ENCODE measurements at regions of chr12 and their contacts with region 1.

Region 1: GRCh38 chr12:24778486-24779304 is 170.2 kb downstream of the BCAT1 start:
- DNase-seq: peak; percentile 58
- ATAC-seq: peak; percentile 83
- H3K4me3 ChIP-seq: no peak overlapping the region
- H3K27ac ChIP-seq: no peak overlapping the region
- H3K4me1 ChIP-seq: peaks cover 10% of the 10 kb centered on the region
- H3K27me3 ChIP-seq: no peaks in the 10 kb centered on the region
- CTCF ChIP-seq: peak; percentile 70
- EP300 ChIP-seq: no peak
- POLR2A ChIP-seq: no peak
- RAD21 ChIP-seq: no peak

Region 2: GRCh38 chr12:23204933-23205778 is 1573.5 kb before region 1 on chr12:
- CTCF ChIA-PET with region 1: interaction called, 5 read pairs
- POLR2A ChIA-PET with region 1: no interaction called
- in situ Hi-C with region 1: loop called (anchors 10 kb)
- intact Hi-C with region 1: no loop called
- DNase-seq: peak; percentile 54
- ATAC-seq: peak; percentile 74
- H3K4me3 ChIP-seq: no peak overlapping the region
- H3K27ac ChIP-seq: no peak overlapping the region
- H3K4me1 ChIP-seq: no peaks in the 10 kb centered on the region
- H3K27me3 ChIP-seq: peaks cover 0 to 1% of the 10 kb centered on the region in 2 experiments; a peak in 1 of 5 replicates
- CTCF ChIP-seq: peak; percentile 85
- EP300 ChIP-seq: no peak
- POLR2A ChIP-seq: no peak
- RAD21 ChIP-seq: no peak; the same call in 1 of the 2 replicates

Region 3: DNA sequence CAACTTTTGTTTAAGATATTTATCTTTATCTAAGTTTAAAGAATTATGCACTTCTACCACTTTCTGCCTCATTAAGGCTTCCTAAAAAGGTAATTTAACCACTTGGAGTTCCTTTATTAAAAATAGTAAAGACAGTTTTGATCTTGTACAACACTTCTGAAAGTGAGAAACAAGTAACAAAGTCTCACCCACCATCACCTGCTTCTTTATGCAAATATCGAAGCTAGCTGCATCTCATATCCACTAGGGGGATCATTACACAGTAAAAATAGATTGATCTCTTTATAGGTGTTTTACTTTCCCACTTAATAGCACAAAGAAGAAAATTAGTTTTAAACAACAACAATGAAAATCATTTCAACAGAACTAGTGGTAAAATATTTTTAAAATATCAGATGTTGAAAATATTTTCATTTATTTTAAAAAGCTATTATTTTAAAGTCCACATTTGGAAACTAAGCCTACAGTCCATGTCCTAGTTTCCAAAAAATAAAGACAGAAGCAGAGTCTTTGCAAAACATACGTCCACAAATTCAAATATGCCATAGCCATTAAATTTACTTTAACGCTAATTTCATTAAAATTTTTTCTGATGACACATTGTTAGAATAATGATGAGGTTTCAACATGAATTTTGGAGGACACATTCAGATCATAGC is 669.2 kb before region 1 on chr12:
- CTCF ChIA-PET with region 1: no interaction called
- POLR2A ChIA-PET with region 1: no interaction called
- in situ Hi-C with region 1: no loop called
- intact Hi-C with region 1: loop called (anchors 1 kb)
- DNase-seq: peak; percentile 17
- ATAC-seq: no peak
- H3K4me3 ChIP-seq: no peak overlapping the region
- H3K27ac ChIP-seq: no peak overlapping the region
- H3K4me1 ChIP-seq: no peaks in the 10 kb centered on the region
- H3K27me3 ChIP-seq: no peaks in the 10 kb centered on the region; a peak in 1 of 5 replicates
- CTCF ChIP-seq: peak; percentile 51
- EP300 ChIP-seq: no peak
- POLR2A ChIP-seq: no peak
- RAD21 ChIP-seq: no peak

Region 4: DNA sequence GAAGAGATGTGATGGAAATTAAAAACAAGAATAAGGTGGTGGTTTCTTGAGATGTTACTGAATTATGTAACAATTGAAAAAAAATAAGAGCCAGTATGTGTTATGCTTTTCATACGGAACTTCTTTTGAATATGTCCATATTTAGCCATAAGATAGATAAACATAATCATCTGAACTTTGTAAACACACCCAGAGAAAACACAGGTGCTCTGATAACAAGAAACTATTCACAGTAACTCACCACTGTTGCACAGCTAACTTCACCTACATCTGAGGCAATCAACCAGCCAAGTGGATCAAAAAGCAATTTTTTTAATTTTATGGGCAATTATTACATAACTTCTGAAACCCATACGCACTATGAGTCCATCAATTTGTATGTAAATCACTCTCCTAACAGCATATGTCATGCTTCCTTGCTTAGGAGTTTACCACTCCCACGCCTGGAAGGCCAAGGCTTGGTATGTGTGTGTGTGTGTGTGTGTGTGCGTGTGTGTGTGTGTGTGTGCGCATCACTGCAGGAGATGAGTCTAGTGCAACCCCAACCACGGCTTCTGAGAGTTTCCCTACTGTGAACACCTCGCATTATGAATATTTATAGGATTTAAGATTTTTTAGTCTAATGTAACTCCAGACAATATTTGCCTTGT is 273.2 kb before region 1 on chr12:
- CTCF ChIA-PET with region 1: no interaction called
- POLR2A ChIA-PET with region 1: no interaction called
- in situ Hi-C with region 1: no loop called
- intact Hi-C with region 1: no loop called
- DNase-seq: no peak
- ATAC-seq: no peak
- H3K4me3 ChIP-seq: no peak overlapping the region
- H3K27ac ChIP-seq: no peak overlapping the region
- H3K4me1 ChIP-seq: no peaks in the 10 kb centered on the region
- H3K27me3 ChIP-seq: no peaks in the 10 kb centered on the region
- CTCF ChIP-seq: no peak
- EP300 ChIP-seq: no peak
- POLR2A ChIP-seq: no peak
- RAD21 ChIP-seq: no peak

Region 5: GRCh38 chr12:24711056-24712008 is 67.4 kb before region 1 on chr12:
- CTCF ChIA-PET with region 1: no interaction called
- POLR2A ChIA-PET with region 1: no interaction called
- in situ Hi-C with region 1: no loop called
- intact Hi-C with region 1: loop called (anchors 5 kb)
- DNase-seq: no peak
- ATAC-seq: no peak
- H3K4me3 ChIP-seq: no peak overlapping the region
- H3K27ac ChIP-seq: no peak overlapping the region
- H3K4me1 ChIP-seq: peaks cover 16% of the 10 kb centered on the region
- H3K27me3 ChIP-seq: no peaks in the 10 kb centered on the region; a peak in 1 of 5 replicates
- CTCF ChIP-seq: no peak
- EP300 ChIP-seq: no peak
- POLR2A ChIP-seq: no peak
- RAD21 ChIP-seq: no peak

Region 6: DNA sequence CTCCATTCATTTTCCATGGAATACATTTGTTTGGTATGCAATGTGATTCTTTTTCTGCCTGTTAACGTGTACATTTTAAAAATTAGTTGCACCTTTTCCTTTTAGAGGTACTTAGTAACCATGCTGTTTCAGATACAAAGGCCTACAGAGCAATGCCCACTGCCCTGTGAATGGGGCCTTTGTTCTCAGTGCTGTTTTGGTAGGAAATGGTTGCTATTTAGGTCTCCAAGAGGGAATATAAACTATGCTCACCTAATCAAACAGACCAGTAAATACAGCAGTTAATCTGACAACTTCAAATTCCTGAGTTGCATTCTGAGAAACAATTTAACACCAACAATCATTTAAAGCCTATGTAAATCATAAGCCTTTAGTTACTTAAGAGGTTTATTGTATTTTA is 18.5 kb before region 1 on chr12:
- CTCF ChIA-PET with region 1: no interaction called
- POLR2A ChIA-PET with region 1: interaction called, 3 read pairs
- in situ Hi-C with region 1: no loop called
- intact Hi-C with region 1: loop called (anchors 2 kb)
- DNase-seq: peak; percentile 95
- ATAC-seq: peak; percentile 99
- H3K4me3 ChIP-seq: peak overlapping the region in 1 of 3 experiments; percentile 11; a peak in 1 of 6 replicates
- H3K27ac ChIP-seq: peak overlapping the region; percentile 97
- H3K4me1 ChIP-seq: peaks cover 74% of the 10 kb centered on the region
- H3K27me3 ChIP-seq: no peaks in the 10 kb centered on the region
- CTCF ChIP-seq: no peak
- EP300 ChIP-seq: peak; percentile 87 to 98
- POLR2A ChIP-seq: no peak
- RAD21 ChIP-seq: no peak